Gastrocnemius medialis (tissue), 4 donors: ENCODE measurements at regions of chr20 and their contacts with region 1.

Region 1: DNA sequence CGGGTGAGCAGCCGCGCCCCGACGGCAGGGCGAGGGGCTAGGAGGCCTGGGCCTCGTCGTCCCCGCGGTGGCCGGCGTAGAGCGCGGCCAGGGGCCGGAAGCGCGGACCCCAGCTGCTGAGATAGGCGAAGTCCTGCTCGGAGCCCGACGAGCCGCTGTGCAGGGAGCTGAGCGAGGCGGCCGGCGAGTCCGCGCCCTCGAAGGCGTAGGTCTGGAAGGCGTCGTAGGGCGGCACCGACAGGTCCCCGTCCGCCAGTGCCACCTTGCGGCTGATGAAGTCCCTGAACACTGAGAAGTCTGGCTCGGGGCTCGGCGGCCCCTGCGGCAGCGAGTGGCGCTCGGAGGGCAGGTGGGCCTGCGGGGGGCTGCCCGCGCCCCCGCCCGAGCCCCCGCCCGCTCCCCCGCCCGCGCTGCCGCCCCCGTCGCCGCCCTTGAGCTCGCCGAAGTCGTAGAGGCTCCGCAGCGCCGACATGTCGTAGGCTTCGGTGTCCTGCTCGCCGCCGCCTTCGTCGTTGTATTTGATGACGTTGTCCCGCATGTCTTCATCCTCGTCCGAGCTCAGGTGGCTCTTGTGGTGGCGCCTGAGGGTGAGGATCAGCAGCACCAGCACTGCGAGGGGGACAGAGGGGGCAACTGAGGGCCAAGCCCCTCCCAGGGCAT is 56.5 kb downstream of the CD40 start:
- DNase-seq: peak; percentile 26 to 48
- ATAC-seq: peak; percentile 68 to 82
- H3K4me3 ChIP-seq: no peak overlapping the region
- H3K27ac ChIP-seq: no peak overlapping the region
- H3K4me1 ChIP-seq: no peaks in the 10 kb centered on the region
- H3K27me3 ChIP-seq: peaks cover 22 to 31% (median 29%) of the 10 kb centered on the region in 3 donors
- CTCF ChIP-seq: peak; percentile 14 to 75 (median 64)
- POLR2A ChIP-seq: no peak

Region 2: GRCh38 chr20:46022411-46023147 is 152.0 kb before region 1 on chr20:
- in situ Hi-C with region 1: no loop called
- intact Hi-C with region 1: loop called (anchors 2 kb)
- DNase-seq: no peak
- ATAC-seq: peak in 1 of 2 donors; percentile 20
- H3K4me3 ChIP-seq: peak overlapping the region in 1 of 4 donors; percentile 49
- H3K27ac ChIP-seq: no peak overlapping the region
- H3K4me1 ChIP-seq: peaks cover 4 to 13% of the 10 kb centered on the region in 2 donors
- H3K27me3 ChIP-seq: peaks cover 63 to 78% (median 68%) of the 10 kb centered on the region in 3 donors
- CTCF ChIP-seq: peak; percentile 65 to 88 (median 81)
- POLR2A ChIP-seq: no peak

Region 3: GRCh38 chr20:46132705-46133120 is 41.9 kb before region 1 on chr20:
- in situ Hi-C with region 1: no loop called
- intact Hi-C with region 1: loop called (anchors 5 kb)
- DNase-seq: peak; percentile 46 to 50
- ATAC-seq: peak; percentile 56 to 82
- H3K4me3 ChIP-seq: no peak overlapping the region
- H3K27ac ChIP-seq: no peak overlapping the region
- H3K4me1 ChIP-seq: peaks cover 5 to 7% of the 10 kb centered on the region in 2 donors
- H3K27me3 ChIP-seq: no peaks in the 10 kb centered on the region
- CTCF ChIP-seq: peak; percentile 79 to 87 (median 84)
- POLR2A ChIP-seq: no peak